Heart right ventricle (tissue), 16 donors: ENCODE measurements at regions of chr7 and their contacts with region 1.

Region 1: GRCh38 chr7:39948956-39949928 is 814 bp upstream of the CDK13 start:
- DNase-seq: peak; percentile 98 to 99
- ATAC-seq: peak; percentile 89 to 97 (median 95)
- H3K4me3 ChIP-seq: peak overlapping the region; percentile 77 to 97 (median 91)
- H3K27ac ChIP-seq: peak overlapping the region; percentile 94 to 100 (median 98)
- H3K4me1 ChIP-seq: peaks cover 0 to 35% (median 30%) of the 10 kb centered on the region in 9 donors
- H3K27me3 ChIP-seq: no peaks in the 10 kb centered on the region
- CTCF ChIP-seq: peak in 3 of 9 donors; percentile 11 to 13 (median 12)

Region 2: GRCh38 chr7:39894904-39895303 is 54.3 kb before region 1 on chr7:
- intact Hi-C with region 1: loop called in 7 of 10 experiments (anchors 2 to 5 kb)
- DNase-seq: no peak
- ATAC-seq: no peak
- H3K4me3 ChIP-seq: no peak overlapping the region
- H3K27ac ChIP-seq: no peak overlapping the region
- H3K4me1 ChIP-seq: peaks cover 0 to 11% (median 0%) of the 10 kb centered on the region in 9 donors
- H3K27me3 ChIP-seq: peaks cover 0 to 10% (median 0%) of the 10 kb centered on the region in 7 donors
- CTCF ChIP-seq: no peak

Region 3: DNA sequence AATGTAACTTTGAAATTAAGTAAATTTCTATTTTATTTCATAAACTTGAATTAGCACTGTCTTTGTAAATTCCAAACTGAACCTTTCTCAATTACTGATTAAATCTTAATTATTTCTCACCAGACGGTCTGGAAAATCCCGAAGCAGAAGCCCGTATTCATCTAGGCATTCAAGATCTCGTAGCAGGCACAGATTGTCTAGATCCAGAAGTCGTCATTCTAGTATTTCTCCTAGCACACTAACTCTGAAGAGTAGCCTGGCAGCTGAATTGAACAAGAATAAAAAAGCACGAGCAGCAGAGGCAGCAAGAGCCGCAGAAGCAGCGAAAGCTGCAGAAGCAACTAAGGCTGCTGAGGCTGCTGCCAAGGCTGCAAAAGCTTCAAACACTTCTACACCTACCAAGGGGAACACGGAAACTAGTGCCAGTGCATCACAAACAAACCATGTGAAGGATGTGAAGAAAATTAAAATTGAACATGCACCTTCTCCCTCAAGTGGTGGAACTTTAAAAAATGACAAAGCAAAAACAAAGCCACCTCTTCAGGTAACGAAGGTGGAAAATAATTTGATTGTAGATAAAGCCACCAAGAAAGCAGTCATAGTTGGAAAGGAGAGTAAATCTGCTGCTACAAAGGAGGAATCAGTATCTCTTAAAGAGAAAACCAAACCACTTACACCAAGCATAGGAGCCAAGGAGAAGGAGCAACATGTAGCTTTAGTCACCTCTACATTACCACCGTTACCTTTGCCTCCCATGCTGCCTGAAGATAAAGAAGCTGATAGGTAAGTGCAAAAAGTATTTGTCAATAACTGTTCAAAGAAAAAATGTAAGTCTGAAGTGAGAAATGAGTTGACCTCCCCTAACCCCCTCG is 38.5 kb after region 1 on chr7:
- intact Hi-C with region 1: loop called in 1 of 10 experiments (anchors 5 kb)
- DNase-seq: no peak
- ATAC-seq: peak in 1 of 8 donors; percentile 46
- H3K4me3 ChIP-seq: no peak overlapping the region
- H3K27ac ChIP-seq: no peak overlapping the region
- H3K4me1 ChIP-seq: peaks cover 0 to 42% (median 33%) of the 10 kb centered on the region in 9 donors
- H3K27me3 ChIP-seq: no peaks in the 10 kb centered on the region
- CTCF ChIP-seq: no peak

Region 4: DNA sequence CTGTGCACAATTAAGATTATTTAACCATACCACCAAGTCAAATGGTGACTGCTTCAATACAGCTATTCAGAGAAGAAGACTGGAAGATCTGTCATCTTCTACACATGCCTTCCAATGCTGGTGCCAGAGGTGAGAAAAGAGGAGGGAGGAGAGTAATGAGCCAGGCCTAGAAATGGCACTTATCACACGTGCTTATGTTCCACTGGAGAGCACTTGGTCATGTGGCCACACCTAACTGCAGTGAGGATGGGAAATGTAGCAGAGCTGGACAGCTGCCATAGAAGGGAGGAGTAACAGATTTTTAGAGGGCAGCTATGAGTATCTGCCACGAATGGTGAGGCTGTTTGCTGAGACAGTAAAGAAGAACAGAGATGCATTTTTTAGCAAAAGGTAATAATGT is 108.0 kb after region 1 on chr7:
- intact Hi-C with region 1: loop called in 8 of 10 experiments (anchors 2 to 5 kb)
- DNase-seq: peak in 1 of 2 donors; percentile 55
- ATAC-seq: peak in 7 of 8 donors; percentile 38 to 83 (median 79)
- H3K4me3 ChIP-seq: no peak overlapping the region
- H3K27ac ChIP-seq: no peak overlapping the region
- H3K4me1 ChIP-seq: peaks cover 0 to 23% (median 8%) of the 10 kb centered on the region in 9 donors
- H3K27me3 ChIP-seq: no peaks in the 10 kb centered on the region
- CTCF ChIP-seq: no peak

Region 5: GRCh38 chr7:40134428-40135316 is 185.4 kb after region 1 on chr7 and contains the starts of genes MPLKIP and SUGCT:
- intact Hi-C with region 1: loop called in 2 of 10 experiments (anchors 1 to 5 kb)
- DNase-seq: peak; percentile 82 to 89
- ATAC-seq: peak; percentile 94 to 98 (median 96)
- H3K4me3 ChIP-seq: peak within 1 kb of the TSS; percentile 63 to 99 (median 88)
- H3K27ac ChIP-seq: peak within 1 kb of the TSS; percentile 89 to 96 (median 91)
- H3K4me1 ChIP-seq: peaks cover 0 to 42% (median 36%) of the 10 kb centered on the region in 9 donors
- H3K27me3 ChIP-seq: peaks cover 0 to 15% (median 0%) of the 10 kb centered on the region in 7 donors
- CTCF ChIP-seq: peak; percentile 98 to 100 (median 99)
- total RNA-seq, gene MPLKIP: 11.3 to 19.1 (median 15.6) TPM
- total RNA-seq, gene SUGCT: 3.5 to 8.1 (median 6.4) TPM

Region 6: DNA sequence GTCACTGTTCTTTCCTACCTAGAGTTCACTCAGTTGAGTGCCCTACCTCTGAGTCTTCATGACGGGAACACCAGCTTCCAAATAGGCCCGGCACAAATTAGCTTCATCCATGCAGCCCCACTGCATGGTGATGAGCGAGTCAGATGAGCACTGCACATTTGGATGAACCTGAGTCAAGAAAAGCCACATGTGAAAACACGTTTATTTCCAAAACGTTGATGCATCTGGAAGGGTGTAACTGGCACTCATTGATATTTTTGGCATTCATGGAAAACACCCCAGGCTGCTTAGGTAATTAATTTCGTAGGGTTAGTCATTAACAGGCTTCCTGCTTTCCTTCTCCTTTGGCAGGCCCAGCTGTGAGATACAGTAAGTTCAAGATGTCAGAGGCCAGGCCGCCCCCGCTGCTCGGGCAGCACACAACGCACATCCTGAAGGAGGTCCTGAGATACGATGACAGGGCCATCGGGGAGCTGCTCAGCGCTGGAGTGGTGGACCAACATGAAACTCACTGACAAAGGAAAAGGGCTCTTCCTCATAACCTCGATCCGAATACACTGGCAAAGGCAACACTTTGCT is 910.8 kb after region 1 on chr7:
- intact Hi-C with region 1: no loop called
- DNase-seq: peak; percentile 12 to 24
- ATAC-seq: peak in 5 of 8 donors; percentile 25 to 79 (median 56)
- H3K4me3 ChIP-seq: no peak overlapping the region
- H3K27ac ChIP-seq: no peak overlapping the region
- H3K4me1 ChIP-seq: no peaks in the 10 kb centered on the region
- H3K27me3 ChIP-seq: no peaks in the 10 kb centered on the region
- CTCF ChIP-seq: no peak